ENCODE measurements at regions of chr3 and their contacts with region 1.

Region 1: GRCh38 chr3:71226565-71227269 is 356.8 kb downstream of the FOXP1 start:
- DNase-seq: peak; percentile 95
- ATAC-seq: peak; percentile 89
- H3K4me3 Mint-ChIP-seq: peak overlapping the region; percentile 78
- H3K27ac Mint-ChIP-seq: peak overlapping the region; percentile 97
- H3K4me1 Mint-ChIP-seq: peaks cover 88% of the 10 kb centered on the region
- H3K27me3 Mint-ChIP-seq: no peaks in the 10 kb centered on the region

Region 2: GRCh38 chr3:71064288-71064955 is 162.3 kb before region 1 on chr3:
- CTCF ChIA-PET with region 1: no interaction called
- POLR2A ChIA-PET with region 1: interaction called, 3 read pairs
- intact Hi-C with region 1: loop called in 1 of 2 experiments (anchors 1 kb)
- DNase-seq: peak; percentile 79
- ATAC-seq: peak; percentile 11
- H3K4me3 Mint-ChIP-seq: no peak overlapping the region
- H3K27ac Mint-ChIP-seq: no peak overlapping the region
- H3K4me1 Mint-ChIP-seq: peaks cover 63% of the 10 kb centered on the region
- H3K27me3 Mint-ChIP-seq: no peaks in the 10 kb centered on the region

Region 3: GRCh38 chr3:71103430-71103921 is 123.2 kb before region 1 on chr3:
- CTCF ChIA-PET with region 1: no interaction called
- POLR2A ChIA-PET with region 1: no interaction called
- intact Hi-C with region 1: no loop called
- DNase-seq: no peak
- ATAC-seq: no peak
- H3K4me3 Mint-ChIP-seq: no peak overlapping the region
- H3K27ac Mint-ChIP-seq: peak overlapping the region; percentile 76
- H3K4me1 Mint-ChIP-seq: peaks cover 96% of the 10 kb centered on the region
- H3K27me3 Mint-ChIP-seq: no peaks in the 10 kb centered on the region

Region 4: GRCh38 chr3:71149959-71150954 is 76.5 kb before region 1 on chr3:
- CTCF ChIA-PET with region 1: no interaction called
- POLR2A ChIA-PET with region 1: no interaction called
- intact Hi-C with region 1: loop called in 1 of 2 experiments (anchors 1 kb)
- DNase-seq: no peak
- ATAC-seq: peak; percentile 87
- H3K4me3 Mint-ChIP-seq: peak overlapping the region; percentile 34
- H3K27ac Mint-ChIP-seq: peak overlapping the region; percentile 34
- H3K4me1 Mint-ChIP-seq: peaks cover 60% of the 10 kb centered on the region
- H3K27me3 Mint-ChIP-seq: no peaks in the 10 kb centered on the region

Region 5: GRCh38 chr3:71360764-71361163 is 134.0 kb after region 1 on chr3:
- CTCF ChIA-PET with region 1: no interaction called
- POLR2A ChIA-PET with region 1: no interaction called
- intact Hi-C with region 1: loop called (anchors 1 kb)
- DNase-seq: peak; percentile 48
- ATAC-seq: peak; percentile 67
- H3K4me3 Mint-ChIP-seq: peak overlapping the region; percentile 50
- H3K27ac Mint-ChIP-seq: peak overlapping the region; percentile 88
- H3K4me1 Mint-ChIP-seq: peaks cover 86% of the 10 kb centered on the region
- H3K27me3 Mint-ChIP-seq: no peaks in the 10 kb centered on the region

Region 6: DNA sequence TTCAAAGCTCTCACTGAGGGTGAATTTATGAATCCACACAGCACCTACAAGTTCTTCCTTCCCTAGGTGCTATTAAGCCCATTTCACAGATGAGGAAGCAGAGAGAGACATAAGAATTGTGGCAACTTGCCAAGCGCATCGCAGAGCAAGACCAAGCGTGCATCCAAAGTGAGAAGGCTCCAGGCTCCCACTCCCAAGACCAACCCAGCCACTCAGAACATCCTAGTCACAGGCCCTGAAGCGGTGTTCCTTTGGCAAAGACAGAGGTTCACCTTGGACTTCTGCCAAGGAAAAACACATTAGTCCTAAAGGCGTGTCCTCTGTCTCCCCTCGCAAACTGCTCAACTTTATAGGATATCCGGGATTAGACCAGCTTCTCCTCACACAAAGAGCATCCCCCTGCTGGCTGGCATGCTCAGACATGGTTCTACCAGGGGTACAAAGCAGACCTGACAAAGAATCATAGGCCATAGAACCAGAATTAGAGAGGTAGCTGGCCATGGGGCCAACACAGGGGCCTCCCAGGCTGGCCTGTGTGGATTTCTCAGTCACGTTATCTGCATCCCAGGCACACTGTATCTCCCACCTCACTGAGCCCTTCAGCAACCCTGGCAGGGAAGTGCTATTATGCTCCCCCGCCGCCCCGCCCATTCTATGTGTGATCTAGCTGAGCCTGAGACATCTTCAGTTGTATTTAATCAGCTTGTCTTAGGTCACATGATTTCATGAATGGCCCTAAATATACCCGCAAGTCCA is 196.6 kb after region 1 on chr3:
- CTCF ChIA-PET with region 1: no interaction called
- POLR2A ChIA-PET with region 1: no interaction called
- intact Hi-C with region 1: loop called in 1 of 2 experiments (anchors 1 kb)
- DNase-seq: no peak
- ATAC-seq: no peak
- H3K4me3 Mint-ChIP-seq: no peak overlapping the region
- H3K27ac Mint-ChIP-seq: peak overlapping the region; percentile 92
- H3K4me1 Mint-ChIP-seq: peaks cover 94% of the 10 kb centered on the region
- H3K27me3 Mint-ChIP-seq: no peaks in the 10 kb centered on the region

Measured in activated CD4-positive, alpha-beta T cell treated with anti-CD3 and anti-CD28 coated beads for 36 hours (primary cell).